Heart right ventricle (tissue), 16 donors: ENCODE measurements at regions of chr5 and their contacts with region 1.

Region 1: DNA sequence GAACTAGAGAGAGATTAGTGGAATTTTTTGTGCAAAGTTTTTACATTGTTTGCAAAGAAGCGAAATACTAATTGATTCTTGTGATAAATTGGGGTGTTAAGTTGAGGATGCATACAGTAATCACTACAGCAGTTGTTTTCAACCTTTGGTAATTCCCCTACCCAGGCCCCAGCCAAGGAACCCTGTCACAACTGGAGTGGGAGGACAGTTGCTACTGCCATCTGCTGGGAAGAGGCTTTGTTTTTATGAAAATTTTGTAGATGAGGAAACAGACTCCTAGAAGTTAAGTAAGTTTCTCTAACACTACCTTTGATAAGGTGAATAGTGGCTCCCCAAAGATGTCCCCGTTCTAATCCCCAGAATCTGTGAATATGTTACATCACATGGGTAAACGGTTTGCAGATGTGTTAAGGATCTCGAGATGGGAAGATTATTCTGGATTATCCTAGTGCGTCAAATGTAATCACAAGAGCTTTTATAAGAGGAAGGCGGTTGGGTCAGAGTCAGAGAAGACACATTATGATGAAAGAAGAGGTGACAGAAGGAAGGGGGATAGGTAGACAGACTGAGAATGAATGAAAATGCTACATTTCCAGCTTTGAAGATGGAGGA is 34.0 kb upstream of the PPP1R2B start:
- DNase-seq: peak in 1 of 2 donors; percentile 26
- ATAC-seq: peak in 4 of 8 donors; percentile 35 to 59 (median 52)
- H3K4me3 ChIP-seq: no peak overlapping the region
- H3K27ac ChIP-seq: no peak overlapping the region
- H3K4me1 ChIP-seq: no peaks in the 10 kb centered on the region
- H3K27me3 ChIP-seq: no peaks in the 10 kb centered on the region
- CTCF ChIP-seq: peak in 8 of 9 donors; percentile 17 to 62 (median 49)

Region 2: DNA sequence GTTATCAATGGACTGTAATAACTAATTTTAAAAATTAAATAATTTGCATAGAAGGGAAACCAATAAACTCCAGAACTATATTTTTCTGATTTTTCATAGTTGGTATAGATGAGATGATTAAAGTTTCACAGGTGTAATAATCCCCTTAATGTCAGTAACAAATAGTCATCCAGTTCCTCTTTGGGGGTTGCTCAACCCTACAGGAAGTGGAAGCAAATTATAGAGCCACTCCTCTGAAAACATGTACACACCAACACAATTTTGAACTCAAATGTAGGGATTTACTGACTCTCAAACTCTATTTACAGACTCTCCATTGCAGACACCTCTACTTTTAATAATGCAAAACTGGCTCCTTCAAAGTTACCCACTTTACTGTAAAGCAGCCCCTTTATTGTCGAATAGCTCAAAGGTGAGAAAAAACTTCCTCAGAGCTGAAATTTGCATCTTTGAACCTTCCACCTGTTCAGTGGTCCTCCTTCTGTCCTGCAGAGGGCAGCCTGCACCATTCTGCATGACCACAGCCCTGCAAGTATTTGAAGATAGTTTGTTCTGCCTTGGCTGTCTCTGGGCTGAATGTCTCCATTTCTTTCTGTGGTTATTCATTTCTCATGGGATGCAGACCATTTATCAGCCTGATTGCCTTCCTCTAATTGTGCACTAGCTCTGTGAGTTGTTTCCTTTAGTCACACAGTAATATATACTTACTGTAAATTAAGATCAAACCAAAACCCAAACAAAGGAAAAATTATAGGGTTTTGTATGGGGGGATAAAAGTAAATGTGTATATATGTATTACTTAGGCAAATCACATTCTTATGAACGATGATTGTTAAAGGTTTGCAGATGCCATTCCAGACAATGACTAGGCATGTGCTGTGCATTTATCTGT is 872.3 kb before region 1 on chr5:
- intact Hi-C with region 1: loop called in 6 of 10 experiments (anchors 5 to 10 kb)
- DNase-seq: peak; percentile 27 to 31
- ATAC-seq: peak in 7 of 8 donors; percentile 65 to 89 (median 75)
- H3K4me3 ChIP-seq: no peak overlapping the region
- H3K27ac ChIP-seq: no peak overlapping the region
- H3K4me1 ChIP-seq: peaks cover 0 to 4% (median 0%) of the 10 kb centered on the region in 9 donors
- H3K27me3 ChIP-seq: no peaks in the 10 kb centered on the region
- CTCF ChIP-seq: peak; percentile 31 to 83 (median 72)

Region 3: DNA sequence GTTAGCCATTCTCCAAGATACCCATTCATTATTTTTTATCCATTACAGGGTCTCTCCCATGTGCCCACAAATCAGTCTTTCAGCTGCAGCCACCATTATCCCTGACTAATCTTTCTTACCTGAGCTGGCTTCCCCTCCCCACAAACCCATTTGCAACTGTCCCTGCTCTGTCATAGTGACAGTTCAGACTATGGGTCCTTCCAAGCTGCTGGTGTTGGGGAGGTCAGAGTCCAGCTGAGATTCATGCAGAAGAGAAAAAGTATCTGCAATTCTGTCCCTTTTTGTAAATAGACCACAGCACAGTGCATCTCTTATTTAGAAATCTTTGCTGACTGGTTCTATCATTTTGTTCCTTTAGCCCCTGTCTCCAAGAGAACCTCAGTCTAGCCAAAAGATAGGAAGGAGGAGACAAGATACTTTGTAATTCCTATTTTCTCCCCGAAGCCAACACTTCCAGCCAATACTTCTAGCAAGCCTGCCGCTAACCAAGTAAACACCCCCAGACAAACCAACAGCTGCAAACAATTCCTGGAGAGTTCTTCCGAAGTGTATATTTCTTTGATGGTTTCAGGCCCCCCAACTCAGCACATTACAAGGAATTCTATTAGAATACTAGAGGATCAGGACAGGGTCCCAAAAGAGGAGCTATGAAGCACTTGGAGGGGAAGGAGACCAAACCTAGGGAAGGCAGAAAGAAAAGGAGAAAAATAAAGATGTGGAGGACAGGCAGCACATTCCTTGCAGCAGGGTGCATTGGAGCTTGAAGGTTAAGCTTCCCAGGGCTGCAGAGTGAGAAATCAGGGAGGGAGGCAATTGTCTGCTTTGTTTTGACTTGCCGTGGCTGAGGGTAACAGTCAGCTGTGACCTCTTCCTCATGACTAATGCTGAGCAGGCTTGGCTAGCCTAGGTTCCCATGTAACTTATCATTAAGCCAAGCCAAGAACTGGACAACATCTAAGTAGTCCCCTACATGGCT is 340.6 kb before region 1 on chr5:
- intact Hi-C with region 1: loop called in 2 of 10 experiments (anchors 10 kb)
- DNase-seq: peak in 1 of 2 donors; percentile 55
- ATAC-seq: peak; percentile 77 to 90 (median 88)
- H3K4me3 ChIP-seq: no peak overlapping the region
- H3K27ac ChIP-seq: peak overlapping the region in 8 of 10 donors; percentile 10 to 71 (median 64)
- H3K4me1 ChIP-seq: peaks cover 10 to 66% (median 45%) of the 10 kb centered on the region in 9 donors
- H3K27me3 ChIP-seq: no peaks in the 10 kb centered on the region
- CTCF ChIP-seq: peak in 2 of 9 donors; percentile 15 to 21